ENCODE measurements at regions of chr17 and their contacts with region 1.

Region 1: DNA sequence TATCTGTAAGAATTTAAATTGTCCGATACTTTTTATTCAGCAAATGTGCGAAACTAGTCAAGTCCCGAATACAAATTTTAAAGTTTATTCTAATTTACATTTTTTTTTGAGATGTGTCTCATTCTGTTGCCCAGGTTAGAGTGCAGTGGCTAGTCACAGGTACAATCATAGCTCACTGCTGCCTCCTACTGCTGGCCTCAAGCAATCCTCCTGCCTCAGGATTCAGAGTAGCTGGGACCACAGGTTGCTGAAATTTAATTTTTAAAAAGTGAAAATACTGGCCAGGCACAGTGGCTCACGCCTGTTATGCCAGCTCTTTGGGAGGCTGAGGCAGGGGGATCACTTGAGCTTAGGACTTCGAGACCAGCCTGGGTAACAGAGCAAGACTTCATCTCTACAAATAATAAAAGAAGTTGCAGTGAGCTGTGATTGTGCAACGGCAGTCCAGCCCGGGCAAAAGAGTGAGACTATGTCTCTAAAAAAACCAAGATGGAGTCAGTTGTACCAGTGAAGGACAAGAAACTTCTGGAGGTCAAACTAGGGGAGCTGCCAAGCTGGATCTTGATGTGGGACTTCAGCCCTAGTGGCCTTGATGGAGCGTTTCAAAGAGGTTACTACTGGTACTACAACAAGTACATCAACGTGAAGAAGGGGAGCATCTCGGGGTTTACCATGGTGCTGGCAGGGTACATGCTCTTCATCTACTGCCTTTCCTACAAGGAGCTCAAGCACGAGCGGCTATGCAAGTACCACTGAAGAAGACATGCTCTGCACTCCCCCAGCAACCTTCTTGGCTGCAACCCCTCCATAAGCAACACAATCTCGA is 5.6 kb downstream of the POLG2 start:
- DNase-seq: peak in 13 of 14 experiments; percentile 22 to 78 (median 37)
- ATAC-seq: peak; percentile 75
- H3K4me3 ChIP-seq: no peak overlapping the region
- H3K4me3 Mint-ChIP-seq: no peak overlapping the region
- H3K27ac ChIP-seq: no peak overlapping the region
- H3K27ac Mint-ChIP-seq: no peak overlapping the region
- H3K4me1 ChIP-seq: peaks cover 23% of the 10 kb centered on the region
- H3K4me1 Mint-ChIP-seq: peaks cover 25% of the 10 kb centered on the region
- H3K27me3 ChIP-seq: no peaks in the 10 kb centered on the region
- H3K27me3 Mint-ChIP-seq: no peaks in the 10 kb centered on the region
- CTCF ChIP-seq: peak; percentile 69

Region 2: DNA sequence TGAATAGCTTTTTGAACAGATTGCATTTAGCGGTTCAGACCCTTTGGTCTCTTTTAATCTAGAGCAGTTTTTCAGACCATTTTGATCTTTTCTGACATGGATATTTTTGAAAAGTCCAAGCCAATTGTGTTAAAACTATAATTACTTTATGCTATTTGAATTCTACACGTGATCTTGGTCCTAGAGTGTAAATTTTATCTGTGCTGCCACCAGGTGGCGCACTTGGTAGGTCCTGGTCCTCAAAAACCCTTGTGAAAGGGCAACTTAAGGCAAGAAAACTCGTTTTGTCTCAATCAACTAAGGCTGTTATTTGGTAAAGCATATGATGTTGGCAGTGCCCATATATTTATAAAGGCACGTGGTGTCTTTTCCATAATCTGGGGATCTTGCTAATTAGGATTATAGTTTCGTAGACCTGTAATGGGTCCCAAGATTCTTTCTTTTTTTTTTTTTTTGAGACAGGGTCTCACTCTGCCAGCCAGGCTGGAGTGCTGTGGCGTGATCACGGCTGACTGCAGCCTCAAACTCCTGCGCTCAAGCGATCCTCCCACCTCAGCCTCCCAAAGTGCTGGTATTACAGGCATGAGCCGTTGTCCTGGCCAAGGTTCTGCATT is 184.3 kb before region 1 on chr17:
- CTCF ChIA-PET with region 1: no interaction called
- POLR2A ChIA-PET with region 1: interaction called, 3 read pairs
- intact Hi-C with region 1: loop called in 1 of 2 experiments (anchors 5 kb)
- DNase-seq: peak; percentile 53 to 87 (median 64)
- ATAC-seq: peak; percentile 71
- H3K4me3 ChIP-seq: no peak overlapping the region
- H3K4me3 Mint-ChIP-seq: no peak overlapping the region
- H3K27ac ChIP-seq: no peak overlapping the region
- H3K27ac Mint-ChIP-seq: no peak overlapping the region
- H3K4me1 ChIP-seq: no peaks in the 10 kb centered on the region
- H3K4me1 Mint-ChIP-seq: no peaks in the 10 kb centered on the region
- H3K27me3 ChIP-seq: no peaks in the 10 kb centered on the region
- H3K27me3 Mint-ChIP-seq: no peaks in the 10 kb centered on the region
- CTCF ChIP-seq: peak; percentile 87

Measured in CD4-positive, alpha-beta T cell (primary cell).